MCF 10A (cell line): ENCODE measurements at regions of chr4 and their contacts with region 1.

Region 1: GRCh38 chr4:102620697-102621497 is 119.7 kb downstream of the NFKB1 start:
- DNase-seq: peak; percentile 77
- H3K4me3 Mint-ChIP-seq: peak overlapping the region; percentile 44
- H3K27ac Mint-ChIP-seq: no peak overlapping the region
- H3K4me1 Mint-ChIP-seq: peaks cover 8% of the 10 kb centered on the region
- H3K27me3 Mint-ChIP-seq: no peaks in the 10 kb centered on the region
- CTCF ChIP-seq: peak; percentile 59

Region 2: DNA sequence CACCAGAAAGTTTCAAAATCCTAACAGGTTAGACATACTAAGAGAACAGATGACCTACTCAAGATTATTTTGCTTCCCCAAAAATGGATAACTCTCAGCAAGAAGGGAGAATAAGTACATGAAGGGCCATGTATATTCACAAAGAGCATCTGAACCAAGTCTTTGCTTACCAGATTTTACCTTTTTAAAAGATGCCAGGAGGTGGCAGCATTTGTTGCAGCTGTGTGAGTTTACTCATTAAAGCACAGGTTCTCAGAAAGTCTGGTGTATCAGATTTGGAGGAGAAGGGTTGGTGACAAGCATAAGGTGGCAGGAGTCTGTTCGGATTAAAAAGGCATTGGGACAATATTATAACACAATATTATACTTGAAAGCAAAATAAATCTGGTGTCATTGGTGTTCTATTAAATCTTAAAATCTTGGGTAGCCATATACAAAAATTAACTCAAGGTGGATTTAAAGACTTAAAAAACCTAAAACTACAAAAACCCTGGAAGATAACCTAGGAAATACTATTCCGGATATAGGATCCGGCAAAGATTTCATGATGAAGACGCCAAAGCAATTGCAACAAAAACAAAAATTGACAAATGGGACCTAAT is 171.0 kb before region 1 on chr4:
- CTCF ChIA-PET with region 1: interaction called, 7 read pairs
- POLR2A ChIA-PET with region 1: interaction called, 3 read pairs
- intact Hi-C with region 1: loop called (anchors 5 kb)
- DNase-seq: peak; percentile 72
- H3K4me3 Mint-ChIP-seq: no peak overlapping the region
- H3K27ac Mint-ChIP-seq: no peak overlapping the region
- H3K4me1 Mint-ChIP-seq: no peaks in the 10 kb centered on the region
- H3K27me3 Mint-ChIP-seq: no peaks in the 10 kb centered on the region
- CTCF ChIP-seq: peak; percentile 63

Region 3: GRCh38 chr4:102717448-102718092 is 96.7 kb after region 1 on chr4:
- CTCF ChIA-PET with region 1: interaction called, 7 read pairs
- POLR2A ChIA-PET with region 1: no interaction called
- intact Hi-C with region 1: loop called (anchors 10 kb)
- DNase-seq: peak; percentile 60
- H3K4me3 Mint-ChIP-seq: no peak overlapping the region
- H3K27ac Mint-ChIP-seq: no peak overlapping the region
- H3K4me1 Mint-ChIP-seq: peaks cover 13% of the 10 kb centered on the region
- H3K27me3 Mint-ChIP-seq: no peaks in the 10 kb centered on the region
- CTCF ChIP-seq: no peak

Region 4: GRCh38 chr4:102815981-102816380 is 195.1 kb after region 1 on chr4:
- CTCF ChIA-PET with region 1: interaction called, 12 read pairs
- POLR2A ChIA-PET with region 1: interaction called, 13 read pairs
- intact Hi-C with region 1: no loop called
- DNase-seq: peak; percentile 51
- H3K4me3 Mint-ChIP-seq: no peak overlapping the region
- H3K27ac Mint-ChIP-seq: peak overlapping the region; percentile 29
- H3K4me1 Mint-ChIP-seq: peaks cover 57% of the 10 kb centered on the region
- H3K27me3 Mint-ChIP-seq: no peaks in the 10 kb centered on the region
- CTCF ChIP-seq: no peak

Region 5: GRCh38 chr4:103008875-103009729 is 388.2 kb after region 1 on chr4:
- CTCF ChIA-PET with region 1: interaction called, 101 read pairs
- POLR2A ChIA-PET with region 1: interaction called, 29 read pairs
- intact Hi-C with region 1: loop called (anchors 1 kb)
- DNase-seq: peak; percentile 80
- H3K4me3 Mint-ChIP-seq: no peak overlapping the region
- H3K27ac Mint-ChIP-seq: no peak overlapping the region
- H3K4me1 Mint-ChIP-seq: peaks cover 26% of the 10 kb centered on the region
- H3K27me3 Mint-ChIP-seq: peaks cover 9% of the 10 kb centered on the region
- CTCF ChIP-seq: peak; percentile 75

Region 6: DNA sequence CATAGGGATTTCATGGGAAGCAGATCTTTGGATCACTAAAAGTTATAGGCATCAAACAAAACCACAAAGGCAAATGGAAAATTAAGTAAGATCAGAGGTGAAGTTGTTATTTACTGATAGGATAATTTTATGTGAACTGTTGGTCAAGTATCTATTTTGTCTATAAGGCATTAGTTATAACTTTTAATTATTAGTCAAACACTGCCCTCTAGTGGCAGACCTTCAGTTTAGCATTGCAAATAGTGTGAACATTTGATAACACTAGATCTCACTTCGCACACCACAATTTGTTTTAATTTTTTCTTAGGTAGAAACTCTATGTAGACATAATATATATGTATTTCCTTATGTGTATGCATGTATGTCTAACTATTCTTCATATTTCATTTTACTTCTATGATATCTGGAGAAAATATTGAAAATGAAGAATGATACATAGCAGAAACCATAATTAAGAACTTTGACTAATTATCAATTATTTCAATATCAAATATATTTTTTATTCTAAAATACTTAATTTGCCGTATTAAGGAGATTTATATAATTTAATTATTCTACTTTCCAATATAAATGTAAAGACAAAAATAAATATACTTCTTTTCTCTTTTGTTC is 1313.4 kb after region 1 on chr4:
- CTCF ChIA-PET with region 1: interaction called, 3 read pairs
- POLR2A ChIA-PET with region 1: no interaction called
- intact Hi-C with region 1: loop called (anchors 5 kb)
- DNase-seq: peak; percentile 67
- H3K4me3 Mint-ChIP-seq: no peak overlapping the region
- H3K27ac Mint-ChIP-seq: no peak overlapping the region
- H3K4me1 Mint-ChIP-seq: no peaks in the 10 kb centered on the region
- H3K27me3 Mint-ChIP-seq: no peaks in the 10 kb centered on the region
- CTCF ChIP-seq: peak; percentile 73